Right cardiac atrium (tissue), 5 donors: ENCODE measurements at regions of chr11 and their contacts with region 1.

Region 1: GRCh38 chr11:111230122-111230465 is 15.4 kb upstream of the POU2AF2 start:
- DNase-seq: no peak
- ATAC-seq: peak; percentile 41 to 63
- H3K4me3 ChIP-seq: no peak overlapping the region
- H3K27ac ChIP-seq: no peak overlapping the region
- H3K4me1 ChIP-seq: no peaks in the 10 kb centered on the region
- H3K27me3 ChIP-seq: no peaks in the 10 kb centered on the region

Region 2: DNA sequence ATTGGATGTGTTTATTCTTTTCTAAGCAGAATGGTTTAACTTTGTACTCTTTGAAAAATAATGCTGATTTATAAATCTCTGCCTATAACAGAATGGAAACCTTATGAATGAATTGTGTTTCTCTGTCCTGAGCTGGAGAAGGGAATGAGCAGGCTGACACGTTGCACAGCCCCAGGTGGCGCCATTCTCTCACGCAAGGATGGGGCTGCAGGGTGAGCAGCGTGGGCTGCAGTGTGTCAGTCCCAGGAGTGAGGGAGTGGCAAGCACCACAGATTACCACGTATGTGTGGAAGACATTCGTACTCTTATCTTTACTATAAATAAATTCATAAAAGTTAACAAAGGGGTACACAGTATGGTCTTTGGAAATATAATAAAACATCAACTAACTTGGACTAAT is 766.9 kb before region 1 on chr11:
- intact Hi-C with region 1: loop called in 1 of 4 experiments (anchors 10 kb)
- DNase-seq: peak; percentile 41 to 81 (median 74)
- ATAC-seq: peak; percentile 81 to 91
- H3K4me3 ChIP-seq: no peak overlapping the region
- H3K27ac ChIP-seq: no peak overlapping the region
- H3K4me1 ChIP-seq: no peaks in the 10 kb centered on the region
- H3K27me3 ChIP-seq: no peaks in the 10 kb centered on the region

Region 3: GRCh38 chr11:110479108-110480101 is 750.7 kb before region 1 on chr11:
- intact Hi-C with region 1: loop called in 1 of 4 experiments (anchors 10 kb)
- DNase-seq: no peak
- ATAC-seq: peak; percentile 51 to 60
- H3K4me3 ChIP-seq: no peak overlapping the region
- H3K27ac ChIP-seq: peak overlapping the region; percentile 32
- H3K4me1 ChIP-seq: no peaks in the 10 kb centered on the region
- H3K27me3 ChIP-seq: no peaks in the 10 kb centered on the region

Region 4: DNA sequence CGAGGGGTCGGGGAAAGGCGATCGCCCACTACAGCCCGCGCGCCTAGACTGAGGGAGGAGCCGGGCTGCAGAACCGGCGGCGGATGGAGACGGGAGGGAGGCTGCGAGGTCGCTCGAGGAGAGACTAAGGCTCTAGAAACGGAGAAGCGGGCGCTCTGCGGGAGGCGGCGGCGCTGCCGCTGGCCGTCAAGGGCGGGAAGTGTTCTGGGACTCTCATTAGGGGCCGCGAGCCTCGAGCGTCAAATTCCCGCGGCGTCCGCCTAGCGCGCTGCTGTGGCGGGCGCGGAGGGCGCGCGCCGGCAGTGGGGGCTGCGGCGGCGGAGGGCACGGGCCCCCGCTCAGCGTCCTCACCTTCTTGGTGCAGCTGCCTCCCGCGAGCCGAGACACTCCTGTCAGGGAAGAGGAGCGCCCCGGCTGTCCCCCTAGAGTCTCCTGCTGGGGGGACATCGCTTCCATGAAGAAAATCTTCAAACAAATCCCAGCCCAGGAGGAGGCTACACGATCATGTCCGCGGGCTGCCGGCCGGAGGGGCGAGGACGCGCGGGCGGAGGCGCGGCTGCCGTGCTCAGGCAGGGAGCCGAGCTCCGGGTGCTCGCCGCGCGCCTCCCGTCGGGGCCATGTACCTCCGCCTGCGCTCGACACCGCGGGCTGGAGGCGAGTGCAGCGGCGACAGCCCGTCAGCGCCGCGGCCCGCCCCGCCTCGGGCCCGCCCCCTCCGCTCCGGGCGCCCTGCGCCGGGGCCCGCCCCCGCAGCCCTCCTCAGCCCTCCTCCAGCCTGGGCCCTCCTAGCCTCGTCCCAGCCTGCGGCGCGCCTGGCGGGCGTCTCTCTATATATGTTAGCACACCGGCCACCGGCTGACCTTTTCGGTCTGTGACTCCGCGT is 518.1 kb before region 1 on chr11 and contains the start of gene ARHGAP20:
- intact Hi-C with region 1: loop called in 1 of 4 experiments (anchors 10 kb)
- DNase-seq: peak; percentile 74 to 88 (median 85)
- ATAC-seq: peak; percentile 97
- H3K4me3 ChIP-seq: peak within 1 kb of the TSS; percentile 64
- H3K27ac ChIP-seq: peak within 1 kb of the TSS; percentile 4
- H3K4me1 ChIP-seq: no peaks in the 10 kb centered on the region
- H3K27me3 ChIP-seq: no peaks in the 10 kb centered on the region
- total RNA-seq, gene ARHGAP20: 0.34 to 0.78 (median 0.42) TPM